Esophagus squamous epithelium (tissue), 5 donors: ENCODE measurements at regions of chr16 and their contacts with region 1.

Region 1: DNA sequence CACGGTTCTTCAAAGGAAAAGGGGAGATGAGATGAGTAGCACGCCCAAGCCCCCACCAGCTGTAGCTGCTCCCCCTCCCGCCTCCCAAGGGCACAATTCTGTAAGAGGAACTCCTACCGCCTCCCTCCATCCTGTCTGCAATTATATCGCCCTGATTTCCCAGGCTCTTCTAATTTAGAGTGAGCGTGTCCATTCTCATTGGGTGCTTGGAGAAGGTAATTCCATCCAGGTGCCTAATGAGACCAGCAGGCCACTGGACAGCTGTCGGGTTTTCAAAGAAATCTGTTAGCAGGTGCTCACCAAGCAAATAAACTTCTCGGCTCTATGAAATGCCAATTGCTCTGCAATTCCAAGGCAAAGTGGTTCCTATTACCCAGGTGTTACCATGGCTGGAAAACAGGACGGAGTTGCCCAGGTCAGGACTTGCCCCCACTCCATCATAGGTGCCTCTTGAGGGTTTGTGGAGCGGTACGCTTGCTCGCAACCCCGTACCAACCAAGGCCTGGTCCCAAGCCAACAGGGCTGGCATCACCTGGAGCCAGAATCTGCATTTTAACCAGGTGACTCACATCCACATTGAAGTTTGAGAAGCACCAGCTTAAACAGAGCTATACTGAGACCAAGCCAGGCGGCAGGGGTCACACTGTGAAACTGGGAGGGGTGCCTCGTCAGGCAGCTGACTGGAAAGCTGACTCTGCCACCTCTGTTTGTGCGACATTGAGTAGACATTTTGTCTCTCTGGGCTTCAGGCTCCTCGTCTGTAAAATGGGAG is 16.5 kb upstream of the MEAK7 start:
- DNase-seq: no peak
- H3K4me3 ChIP-seq: no peak overlapping the region
- H3K27ac ChIP-seq: no peak overlapping the region
- H3K4me1 ChIP-seq: peaks cover 0 to 13% (median 0%) of the 10 kb centered on the region in 3 donors
- H3K27me3 ChIP-seq: no peaks in the 10 kb centered on the region
- CTCF ChIP-seq: no peak
- POLR2A ChIP-seq: no peak

Region 2: GRCh38 chr16:84607694-84608093 is 86.8 kb after region 1 on chr16:
- intact Hi-C with region 1: loop called (anchors 5 kb)
- DNase-seq: no peak
- H3K4me3 ChIP-seq: no peak overlapping the region
- H3K27ac ChIP-seq: peak overlapping the region in 3 of 4 donors; percentile 31 to 60 (median 52)
- H3K4me1 ChIP-seq: peaks cover 8 to 67% (median 10%) of the 10 kb centered on the region in 3 donors
- H3K27me3 ChIP-seq: no peaks in the 10 kb centered on the region
- CTCF ChIP-seq: no peak
- POLR2A ChIP-seq: peak in 1 of 4 donors; percentile 43